IMR-90 (cell line): ENCODE measurements at regions of chr12 and their contacts with region 1.

Region 1: GRCh38 chr12:107702106-107702505 is 16.5 kb downstream of the PWP1 start:
- DNase-seq: no peak
- ATAC-seq: no peak
- H3K4me3 ChIP-seq: no peak overlapping the region
- H3K27ac ChIP-seq: no peak overlapping the region
- H3K4me1 ChIP-seq: peaks cover 2% of the 10 kb centered on the region; the same call in 1 of the 2 replicates
- H3K27me3 ChIP-seq: no peaks in the 10 kb centered on the region
- CTCF ChIP-seq: no peak
- POLR2A ChIP-seq: no peak
- RAD21 ChIP-seq: no peak

Region 2: GRCh38 chr12:107736914-107737313 is 34.8 kb after region 1 on chr12:
- CTCF ChIA-PET with region 1: interaction called, 3 read pairs
- POLR2A ChIA-PET with region 1: no interaction called
- dilution Hi-C with region 1: no loop called
- in situ Hi-C with region 1: loop called (anchors 5 kb)
- intact Hi-C with region 1: no loop called
- DNase-seq: no peak
- ATAC-seq: no peak
- H3K4me3 ChIP-seq: no peak overlapping the region
- H3K27ac ChIP-seq: no peak overlapping the region
- H3K4me1 ChIP-seq: no peaks in the 10 kb centered on the region
- H3K27me3 ChIP-seq: no peaks in the 10 kb centered on the region
- CTCF ChIP-seq: no peak
- POLR2A ChIP-seq: no peak
- RAD21 ChIP-seq: no peak

Region 3: GRCh38 chr12:107748472-107748871 is 46.4 kb after region 1 on chr12:
- CTCF ChIA-PET with region 1: no interaction called
- POLR2A ChIA-PET with region 1: no interaction called
- dilution Hi-C with region 1: no loop called
- in situ Hi-C with region 1: loop called (anchors 5 kb)
- intact Hi-C with region 1: loop called (anchors 5 kb)
- DNase-seq: peak; percentile 81
- ATAC-seq: peak; percentile 82
- H3K4me3 ChIP-seq: no peak overlapping the region
- H3K27ac ChIP-seq: no peak overlapping the region
- H3K4me1 ChIP-seq: peaks cover 11% of the 10 kb centered on the region
- H3K27me3 ChIP-seq: no peaks in the 10 kb centered on the region
- CTCF ChIP-seq: no peak
- POLR2A ChIP-seq: no peak
- RAD21 ChIP-seq: no peak

Region 4: GRCh38 chr12:107760809-107761501 is 58.8 kb after region 1 on chr12 and contains the start of gene PRDM4:
- CTCF ChIA-PET with region 1: no interaction called
- POLR2A ChIA-PET with region 1: no interaction called
- dilution Hi-C with region 1: no loop called
- in situ Hi-C with region 1: no loop called
- intact Hi-C with region 1: loop called (anchors 2 kb)
- DNase-seq: peak; percentile 93
- ATAC-seq: peak; percentile 97
- H3K4me3 ChIP-seq: peak within 1 kb of the TSS; percentile 89
- H3K27ac ChIP-seq: peak within 1 kb of the TSS; percentile 66
- H3K4me1 ChIP-seq: peaks cover 3% of the 10 kb centered on the region
- H3K27me3 ChIP-seq: peaks cover 2% of the 10 kb centered on the region; the same call in 1 of the 2 replicates
- CTCF ChIP-seq: peak; percentile 59
- POLR2A ChIP-seq: peak; percentile 96
- RAD21 ChIP-seq: peak; percentile 57
- total RNA-seq, gene PRDM4: 26.1 and 26.7 TPM in 2 replicates

Region 5: DNA sequence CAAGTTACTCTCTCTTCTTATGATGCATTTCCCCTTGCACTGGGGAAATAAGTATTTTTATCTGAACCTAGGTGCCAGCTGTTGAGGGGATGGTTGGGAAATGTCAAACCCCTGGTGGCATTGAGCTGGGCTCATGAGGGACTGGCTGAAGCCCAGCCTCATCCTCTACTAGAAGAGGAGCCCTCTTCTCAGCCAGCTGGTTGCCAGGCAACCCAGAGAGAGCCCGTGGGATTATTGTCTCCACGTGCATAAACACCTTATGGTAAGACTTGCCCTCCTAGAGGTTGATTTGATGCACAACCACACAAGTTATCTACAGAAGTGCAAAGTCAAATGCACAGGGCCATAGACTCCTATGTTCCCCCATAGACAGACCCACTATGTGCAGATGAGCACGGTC is 516.8 kb after region 1 on chr12:
- CTCF ChIA-PET with region 1: no interaction called
- POLR2A ChIA-PET with region 1: no interaction called
- dilution Hi-C with region 1: no loop called
- in situ Hi-C with region 1: no loop called
- intact Hi-C with region 1: no loop called
- DNase-seq: no peak
- ATAC-seq: no peak
- H3K4me3 ChIP-seq: no peak overlapping the region
- H3K27ac ChIP-seq: no peak overlapping the region
- H3K4me1 ChIP-seq: no peaks in the 10 kb centered on the region
- H3K27me3 ChIP-seq: no peaks in the 10 kb centered on the region
- CTCF ChIP-seq: no peak
- POLR2A ChIP-seq: no peak
- RAD21 ChIP-seq: no peak